ENCODE measurements at regions of chr1 and their contacts with region 1.

Region 1: DNA sequence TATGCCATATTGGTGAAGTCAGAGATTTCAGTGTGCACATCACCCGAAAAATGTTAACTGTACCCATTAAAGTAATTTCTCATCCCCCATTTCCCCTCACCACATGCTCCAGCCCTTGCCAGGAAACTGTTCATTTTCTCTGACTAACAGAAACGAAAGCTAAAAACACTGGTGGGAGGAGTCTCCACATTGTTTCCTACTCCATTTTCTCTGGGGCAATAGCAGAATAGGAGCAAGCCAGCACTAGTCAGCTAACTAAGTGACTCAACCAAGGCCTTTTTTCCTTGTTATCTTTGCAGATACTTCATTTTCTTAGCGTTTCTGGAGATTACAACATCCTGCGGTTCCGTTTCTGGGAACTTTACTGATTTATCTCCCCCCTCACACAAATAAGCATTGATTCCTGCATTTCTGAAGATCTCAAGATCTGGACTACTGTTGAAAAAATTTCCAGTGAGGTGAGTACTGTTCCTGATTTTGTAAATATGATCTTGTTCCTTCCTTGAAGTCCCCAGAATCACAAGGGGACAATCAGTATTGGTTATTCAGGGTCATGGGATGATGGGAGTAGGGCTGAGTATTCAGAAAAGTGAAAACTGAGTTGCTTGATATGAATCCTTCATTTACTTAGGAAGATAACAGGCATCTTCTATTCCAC is at the start of gene IFI16:
- DNase-seq: peak; percentile 59
- CTCF ChIP-seq: no peak

Region 2: GRCh38 chr1:158177700-158178450 is 832.0 kb before region 1 on chr1:
- in situ Hi-C with region 1: loop called (anchors 25 kb)
- DNase-seq: peak; percentile 55
- CTCF ChIP-seq: no peak

Region 3: GRCh38 chr1:158961178-158961577 is 48.7 kb before region 1 on chr1:
- in situ Hi-C with region 1: no loop called
- DNase-seq: no peak
- CTCF ChIP-seq: no peak

Region 4: DNA sequence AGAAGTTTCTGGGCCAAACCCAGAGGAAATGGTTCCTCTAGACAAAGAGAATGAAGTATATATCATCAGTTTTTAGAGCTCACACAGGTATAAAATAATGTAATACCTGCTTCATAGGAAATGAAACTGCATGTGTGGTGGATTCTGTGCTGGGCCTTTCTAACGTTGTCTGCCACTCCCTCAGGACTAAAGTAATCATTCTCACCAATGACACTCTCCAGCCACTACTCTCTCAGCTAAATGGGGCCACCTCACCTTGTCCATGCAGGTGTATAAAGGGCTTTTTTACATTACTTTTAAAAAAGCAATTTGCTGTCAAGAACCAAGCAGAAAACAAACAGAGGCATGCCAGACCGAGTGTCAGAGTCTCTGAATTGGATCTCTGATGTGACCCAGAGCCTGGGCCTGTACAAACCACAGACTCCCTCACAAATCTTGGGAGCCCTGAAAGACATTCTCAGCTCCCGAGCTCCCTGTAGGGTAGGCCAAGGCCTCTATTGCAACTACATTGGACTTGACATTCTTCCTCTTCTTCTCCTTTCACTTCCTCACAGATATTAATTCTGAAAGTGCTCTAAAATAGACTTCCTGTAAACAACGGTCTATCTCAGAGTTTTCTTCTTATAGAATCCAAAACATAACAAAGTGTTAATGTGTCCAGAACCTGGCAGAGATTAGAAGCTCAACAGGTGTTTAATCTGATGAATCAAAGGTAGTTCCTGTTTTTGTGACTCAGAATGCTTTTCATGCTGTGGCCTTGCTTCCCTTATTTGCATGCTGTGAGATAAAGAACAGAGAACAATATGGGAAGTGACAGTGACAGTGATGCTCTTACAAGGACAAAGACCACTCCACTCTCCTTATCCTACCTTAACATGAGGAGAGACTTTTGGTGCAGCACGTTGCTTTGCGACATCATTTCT is 58.1 kb after region 1 on chr1:
- in situ Hi-C with region 1: loop called (anchors 10 kb)
- DNase-seq: peak; percentile 51
- CTCF ChIP-seq: no peak

Region 5: GRCh38 chr1:159492575-159493323 is 482.9 kb after region 1 on chr1:
- in situ Hi-C with region 1: no loop called
- DNase-seq: no peak
- CTCF ChIP-seq: no peak